Posterior vena cava (tissue), 2 donors: ENCODE measurements at regions of chr12 and their contacts with region 1.

Region 1: GRCh38 chr12:17333287-17333686 is 727.3 kb upstream of the LMO3 start:
- DNase-seq: no peak

Region 2: GRCh38 chr12:17215759-17216570 is 117.3 kb before region 1 on chr12:
- intact Hi-C with region 1: loop called in 1 of 2 experiments (anchors 10 kb)
- DNase-seq: no peak